MCF 10A (cell line): ENCODE measurements at regions of chr10 and their contacts with region 1.

Region 1: GRCh38 chr10:74293686-74294371 is 142.8 kb downstream of the ADK start:
- DNase-seq: peak; percentile 81
- H3K4me3 Mint-ChIP-seq: peak overlapping the region; percentile 25
- H3K27ac Mint-ChIP-seq: peak overlapping the region; percentile 98
- H3K4me1 Mint-ChIP-seq: peaks cover 27% of the 10 kb centered on the region
- H3K27me3 Mint-ChIP-seq: no peaks in the 10 kb centered on the region
- CTCF ChIP-seq: no peak

Region 2: GRCh38 chr10:74213571-74214162 is 80.2 kb before region 1 on chr10:
- CTCF ChIA-PET with region 1: no interaction called
- POLR2A ChIA-PET with region 1: no interaction called
- intact Hi-C with region 1: no loop called
- DNase-seq: peak; percentile 68
- H3K4me3 Mint-ChIP-seq: no peak overlapping the region
- H3K27ac Mint-ChIP-seq: no peak overlapping the region
- H3K4me1 Mint-ChIP-seq: peaks cover 12% of the 10 kb centered on the region
- H3K27me3 Mint-ChIP-seq: no peaks in the 10 kb centered on the region
- CTCF ChIP-seq: peak; percentile 49

Region 3: DNA sequence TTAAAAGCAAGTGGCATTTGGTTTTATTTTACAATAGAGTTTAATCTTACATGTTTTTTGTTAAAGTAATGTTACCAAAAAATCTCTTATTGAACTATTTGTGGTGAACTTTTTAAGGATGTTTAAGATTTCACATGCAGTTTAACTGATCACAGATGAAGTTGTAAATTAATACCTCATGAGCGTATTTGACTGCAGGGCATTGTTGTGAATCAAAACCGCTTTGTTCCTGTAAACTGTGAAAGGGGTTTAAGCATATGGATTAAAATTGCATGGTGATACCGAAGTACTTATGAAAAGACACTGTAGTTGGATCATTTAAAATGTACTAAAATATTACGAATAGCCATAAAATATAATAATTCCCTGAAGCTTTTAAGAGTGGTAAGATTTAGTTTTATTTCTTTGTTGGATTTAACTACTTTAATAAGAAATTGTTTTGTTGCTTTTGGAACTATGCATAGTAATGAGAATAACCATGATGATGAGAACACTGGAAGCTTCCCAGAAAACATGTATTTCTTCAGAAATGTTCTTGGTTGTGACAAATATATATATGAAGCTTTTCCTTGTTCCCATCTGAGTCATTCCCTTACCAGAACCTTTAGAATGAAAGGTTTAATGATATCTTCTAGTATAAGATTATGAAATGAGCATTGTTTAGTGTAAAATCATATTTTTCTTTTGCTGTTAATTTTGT is 11.5 kb before region 1 on chr10:
- CTCF ChIA-PET with region 1: interaction called, 3 read pairs
- POLR2A ChIA-PET with region 1: interaction called, 46 read pairs
- intact Hi-C with region 1: no loop called
- DNase-seq: peak; percentile 77
- H3K4me3 Mint-ChIP-seq: peak overlapping the region; percentile 28
- H3K27ac Mint-ChIP-seq: peak overlapping the region; percentile 97
- H3K4me1 Mint-ChIP-seq: peaks cover 28% of the 10 kb centered on the region
- H3K27me3 Mint-ChIP-seq: no peaks in the 10 kb centered on the region
- CTCF ChIP-seq: no peak

Region 4: GRCh38 chr10:74306227-74306982 is 12.6 kb after region 1 on chr10:
- CTCF ChIA-PET with region 1: no interaction called
- POLR2A ChIA-PET with region 1: interaction called, 23 read pairs
- intact Hi-C with region 1: no loop called
- DNase-seq: no peak
- H3K4me3 Mint-ChIP-seq: no peak overlapping the region
- H3K27ac Mint-ChIP-seq: peak overlapping the region; percentile 25
- H3K4me1 Mint-ChIP-seq: peaks cover 27% of the 10 kb centered on the region
- H3K27me3 Mint-ChIP-seq: no peaks in the 10 kb centered on the region
- CTCF ChIP-seq: no peak